ENCODE measurements at regions of chr7 and their contacts with region 1.

Region 1: DNA sequence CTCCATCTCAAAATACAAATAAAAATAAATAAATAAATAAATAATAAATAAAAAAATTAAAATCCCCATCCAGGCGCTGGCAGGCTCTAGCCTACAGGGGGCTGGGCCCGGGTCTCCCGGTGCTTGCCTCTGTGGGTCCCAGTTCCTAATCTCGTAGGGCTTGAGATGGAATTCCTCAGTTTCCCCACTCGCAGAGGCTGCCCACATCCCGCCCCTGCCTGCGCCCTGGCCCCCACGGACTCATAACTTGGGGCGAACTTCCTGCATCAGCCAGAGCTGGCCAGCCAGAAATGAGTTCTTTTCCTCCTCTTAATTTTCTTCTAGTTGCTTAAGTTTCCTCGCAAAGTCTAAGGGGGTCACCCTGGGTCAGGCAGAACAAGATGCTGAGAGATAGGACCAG is 22.0 kb upstream of the SRRM3 start:
- DNase-seq: no peak

Region 2: DNA sequence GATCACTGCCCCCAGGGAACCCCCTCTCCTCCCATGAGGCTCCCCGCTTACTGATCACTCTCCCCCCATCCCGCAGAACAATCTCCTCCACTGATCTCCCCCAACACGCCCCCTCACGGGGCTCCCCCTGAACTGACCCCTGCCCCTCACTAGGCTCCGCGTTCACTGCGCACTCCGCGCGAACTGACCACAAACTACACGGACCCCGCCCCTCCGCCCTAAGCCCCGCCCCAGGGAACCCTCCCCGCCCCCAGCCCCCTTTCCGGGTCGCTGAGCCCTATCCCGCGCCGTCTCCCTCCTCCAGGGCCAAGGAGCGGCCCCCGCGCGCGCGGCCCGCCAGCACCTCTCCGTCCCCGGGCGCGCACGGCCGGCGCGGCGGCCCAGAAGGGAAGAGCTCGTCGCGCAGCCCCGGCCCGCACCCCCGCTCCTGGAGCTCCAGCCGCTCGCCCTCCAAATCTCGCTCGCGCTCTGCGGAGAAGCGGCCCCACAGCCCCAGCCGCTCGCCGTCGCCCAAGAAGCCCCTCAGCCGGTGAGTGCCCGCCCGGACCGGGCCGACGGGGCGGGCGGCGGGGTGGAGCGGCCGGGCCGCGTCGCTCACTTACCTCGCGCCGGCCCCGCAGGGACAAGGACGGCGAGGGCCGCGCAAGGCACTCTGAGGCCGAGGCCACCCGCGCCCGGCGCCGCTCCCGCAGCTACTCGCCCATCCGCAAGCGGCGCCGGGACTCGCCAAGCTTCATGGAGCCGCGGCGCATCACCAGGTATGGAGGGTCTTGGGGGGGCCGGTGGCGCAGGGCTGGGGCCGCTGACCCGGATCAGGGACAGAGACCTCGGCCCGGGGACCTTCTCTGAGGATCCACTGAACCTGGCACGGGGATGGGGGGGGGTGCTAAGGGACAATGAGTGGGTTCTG is 102.9 kb after region 1 on chr7:
- intact Hi-C with region 1: loop called in 1 of 2 experiments (anchors 10 kb)
- DNase-seq: no peak

Region 3: GRCh38 chr7:76314042-76314721 is 134.5 kb after region 1 on chr7:
- intact Hi-C with region 1: loop called (anchors 2 kb)
- DNase-seq: peak; percentile 99